Right lobe of liver (tissue), 6 donors: ENCODE measurements at regions of chr5 and their contacts with region 1.

Region 1: GRCh38 chr5:134586866-134587524 is 45.6 kb downstream of the SAR1B start:
- DNase-seq: peak; percentile 82 to 85 (median 83)
- ATAC-seq: peak; percentile 85 to 95 (median 92)
- H3K4me3 ChIP-seq: no peak overlapping the region
- H3K27ac ChIP-seq: peak overlapping the region in 1 of 3 donors; percentile 4
- H3K4me1 ChIP-seq: peaks cover 0 to 14% (median 3%) of the 10 kb centered on the region in 4 donors
- H3K27me3 ChIP-seq: no peaks in the 10 kb centered on the region
- CTCF ChIP-seq: peak; percentile 68 to 75 (median 72)
- POLR2A ChIP-seq: no peak

Region 2: DNA sequence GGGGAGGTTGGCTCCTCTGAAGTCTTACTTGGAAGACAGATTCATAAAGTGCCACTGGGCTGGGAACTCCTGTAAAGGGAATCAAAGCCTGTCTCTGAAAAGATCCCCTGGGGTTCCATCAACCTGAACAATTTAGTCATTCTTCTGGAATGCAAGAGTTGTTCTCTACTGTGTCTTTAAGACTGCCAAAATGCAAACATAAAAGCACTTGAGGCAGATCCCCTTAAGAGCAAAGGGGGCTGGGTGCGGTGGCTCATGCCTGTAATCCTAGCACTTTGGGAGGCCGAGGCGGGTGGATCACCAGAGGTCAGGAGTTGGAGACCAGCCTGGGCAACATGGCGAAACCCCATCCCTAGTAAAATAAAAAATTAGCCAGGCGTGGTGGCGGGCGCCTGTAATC is 192.1 kb before region 1 on chr5:
- intact Hi-C with region 1: loop called in 1 of 2 experiments (anchors 10 kb)
- DNase-seq: no peak
- ATAC-seq: no peak
- H3K4me3 ChIP-seq: no peak overlapping the region
- H3K27ac ChIP-seq: no peak overlapping the region
- H3K4me1 ChIP-seq: peaks cover 0 to 9% (median 0%) of the 10 kb centered on the region in 4 donors
- H3K27me3 ChIP-seq: no peaks in the 10 kb centered on the region
- CTCF ChIP-seq: no peak
- POLR2A ChIP-seq: no peak